GM12878 (cell line): ENCODE measurements at regions of chr20 and their contacts with region 1.

Region 1: GRCh38 chr20:5156675-5157448 is 30.1 kb downstream of the CDS2 start:
- DNase-seq: no peak
- ATAC-seq: no peak
- H3K4me3 ChIP-seq: no peak overlapping the region
- H3K27ac ChIP-seq: no peak overlapping the region
- H3K4me1 ChIP-seq: peaks cover 2% of the 10 kb centered on the region; the same call in 1 of the 2 replicates
- H3K27me3 ChIP-seq: no peaks in the 10 kb centered on the region
- CTCF ChIP-seq: no peak
- EP300 ChIP-seq: no peak
- POLR2A ChIP-seq: no peak
- RAD21 ChIP-seq: no peak

Region 2: DNA sequence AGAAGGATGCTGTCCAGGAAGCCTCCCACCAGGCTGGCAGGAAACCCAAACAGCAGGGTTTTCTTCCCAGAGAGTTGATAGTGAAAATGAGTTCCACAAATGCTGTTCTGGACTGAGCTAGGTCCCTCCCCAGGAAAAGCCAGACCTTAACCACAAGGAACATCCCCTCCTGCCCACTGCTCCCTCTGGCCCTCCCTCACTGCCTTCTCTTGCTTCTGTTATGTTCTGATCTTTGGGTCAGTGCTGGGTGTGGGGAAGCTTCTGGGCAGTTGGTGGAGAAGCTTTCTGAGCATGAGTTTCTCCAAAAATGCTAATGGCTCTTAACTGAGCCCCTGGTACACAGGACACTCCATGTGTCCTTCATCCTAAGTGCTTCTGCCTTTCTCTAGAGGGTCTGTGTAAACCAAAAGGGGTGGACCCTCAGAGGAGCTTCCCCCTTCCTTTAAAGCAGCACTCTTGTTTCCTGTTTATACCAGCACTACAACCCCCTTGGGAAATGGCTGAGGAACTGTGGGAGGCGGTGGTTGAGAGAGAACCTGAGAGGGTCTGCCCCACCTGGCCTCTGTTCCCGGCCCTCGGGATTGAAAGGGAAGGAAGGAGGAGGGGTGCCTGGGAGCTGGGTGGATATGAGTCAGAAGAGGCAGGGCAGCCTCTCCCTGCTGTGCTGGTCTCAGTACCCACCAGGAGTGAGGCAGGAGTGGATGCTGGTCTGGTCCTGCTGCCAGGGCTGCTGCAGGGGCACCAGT is 12.0 kb after region 1 on chr20:
- CTCF ChIA-PET with region 1: interaction called, 11 read pairs
- POLR2A ChIA-PET with region 1: interaction called, 6 read pairs
- RAD21 ChIA-PET with region 1: no interaction called
- SMC1A ChIA-PET with region 1: interaction called, 24 read pairs
- in situ Hi-C with region 1: no loop called
- intact Hi-C with region 1: no loop called
- DNase-seq: no peak
- ATAC-seq: peak; percentile 7
- H3K4me3 ChIP-seq: no peak overlapping the region
- H3K27ac ChIP-seq: peak overlapping the region; percentile 27
- H3K4me1 ChIP-seq: peaks cover 56% of the 10 kb centered on the region
- H3K27me3 ChIP-seq: no peaks in the 10 kb centered on the region
- CTCF ChIP-seq: no peak
- EP300 ChIP-seq: no peak
- POLR2A ChIP-seq: no peak
- RAD21 ChIP-seq: no peak